Esophagus muscularis mucosa (tissue), 4 donors: ENCODE measurements at regions of chr7 and their contacts with region 1.

Region 1: GRCh38 chr7:27196287-27196767 is 3.6 kb downstream of the HOXA13 start:
- DNase-seq: no peak
- H3K4me3 ChIP-seq: no peak overlapping the region
- H3K27ac ChIP-seq: no peak overlapping the region
- H3K4me1 ChIP-seq: peaks cover 28 to 54% (median 50%) of the 10 kb centered on the region in 4 donors
- H3K27me3 ChIP-seq: peaks cover 10 to 100% (median 85%) of the 10 kb centered on the region in 4 donors
- CTCF ChIP-seq: peak; percentile 61 to 70 (median 66)
- EP300 ChIP-seq: no peak
- POLR2A ChIP-seq: no peak

Region 2: GRCh38 chr7:26735976-26736600 is 460.2 kb before region 1 on chr7:
- intact Hi-C with region 1: no loop called
- DNase-seq: no peak
- H3K4me3 ChIP-seq: no peak overlapping the region
- H3K27ac ChIP-seq: no peak overlapping the region
- H3K4me1 ChIP-seq: no peaks in the 10 kb centered on the region
- H3K27me3 ChIP-seq: no peaks in the 10 kb centered on the region
- CTCF ChIP-seq: no peak
- EP300 ChIP-seq: no peak
- POLR2A ChIP-seq: no peak

Region 3: DNA sequence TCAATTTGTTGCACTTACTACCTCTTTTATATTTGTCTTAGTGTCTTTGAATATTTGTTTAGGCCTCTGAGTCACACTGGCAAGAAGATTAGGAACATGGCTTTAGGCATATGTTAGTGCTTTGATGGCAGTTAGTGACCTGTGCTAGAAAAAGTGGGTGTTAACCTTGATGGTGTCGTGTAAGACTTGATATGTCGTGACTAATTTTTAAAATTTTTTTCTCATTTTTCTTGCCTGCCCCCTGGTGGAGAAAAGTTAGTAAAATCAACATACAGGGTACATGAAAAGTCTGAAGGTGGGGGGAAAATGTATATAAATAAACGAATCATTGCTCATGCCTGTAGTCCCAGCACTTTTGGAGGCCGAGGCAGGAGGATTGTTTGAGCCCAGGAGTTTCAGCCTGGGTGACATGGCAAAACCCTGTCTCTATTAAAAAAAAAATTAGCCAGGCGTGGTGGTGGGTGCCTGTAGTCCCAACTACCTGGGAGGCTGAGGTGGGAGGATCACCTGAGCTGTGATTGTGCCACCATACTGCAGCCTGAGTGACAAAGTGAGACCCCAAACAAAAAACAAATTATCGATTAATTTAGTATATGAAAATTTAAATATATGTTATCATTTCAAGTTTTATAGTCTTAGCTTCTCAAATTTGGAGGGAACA is 588.2 kb after region 1 on chr7:
- intact Hi-C with region 1: loop called (anchors 10 kb)
- DNase-seq: no peak
- H3K4me3 ChIP-seq: no peak overlapping the region
- H3K27ac ChIP-seq: no peak overlapping the region
- H3K4me1 ChIP-seq: peaks cover 0 to 8% (median 4%) of the 10 kb centered on the region in 4 donors
- H3K27me3 ChIP-seq: no peaks in the 10 kb centered on the region
- CTCF ChIP-seq: peak; percentile 38 to 55 (median 43)
- EP300 ChIP-seq: no peak
- POLR2A ChIP-seq: no peak

Region 4: DNA sequence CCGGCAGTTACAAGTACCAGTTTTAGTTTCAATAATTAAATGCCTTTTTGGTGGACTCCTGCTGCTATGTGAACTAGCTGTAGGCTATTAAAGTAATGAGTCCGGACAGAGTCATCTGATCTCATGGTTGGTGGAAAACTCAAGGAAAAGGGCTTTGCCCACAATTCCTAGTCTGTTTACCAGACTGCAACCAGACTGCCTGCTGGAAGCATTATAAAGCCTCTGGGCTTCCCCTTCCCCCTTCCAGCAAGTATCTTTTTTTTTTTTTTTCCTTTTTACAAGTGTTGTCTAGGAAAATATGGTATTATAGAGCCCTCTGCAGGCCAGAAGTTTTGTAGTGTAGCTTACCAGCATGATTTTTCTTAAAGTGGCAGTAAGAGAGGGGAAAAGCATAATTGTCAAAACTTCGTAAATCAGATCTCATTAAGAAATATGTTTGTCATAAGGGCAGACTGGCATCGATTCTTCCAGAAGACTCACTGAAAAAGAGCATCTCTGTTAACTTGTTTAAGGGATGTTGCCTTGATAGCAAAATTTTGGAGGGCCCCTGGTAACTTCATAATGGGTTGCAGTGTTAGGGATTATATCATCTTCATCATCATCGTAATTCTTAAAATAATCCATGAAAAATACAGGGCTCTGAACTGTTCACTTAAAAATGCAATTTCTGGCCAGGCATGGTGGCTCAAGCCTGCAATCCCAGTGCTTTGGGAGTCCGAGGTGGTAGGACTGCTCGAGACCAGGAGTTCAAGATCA is 724.9 kb after region 1 on chr7:
- intact Hi-C with region 1: loop called (anchors 5 kb)
- DNase-seq: no peak
- H3K4me3 ChIP-seq: no peak overlapping the region
- H3K27ac ChIP-seq: no peak overlapping the region
- H3K4me1 ChIP-seq: peaks cover 12 to 25% (median 18%) of the 10 kb centered on the region in 4 donors
- H3K27me3 ChIP-seq: no peaks in the 10 kb centered on the region
- CTCF ChIP-seq: peak; percentile 35 to 48 (median 45)
- EP300 ChIP-seq: no peak
- POLR2A ChIP-seq: no peak

Region 5: GRCh38 chr7:28020302-28020940 is 824.1 kb after region 1 on chr7:
- intact Hi-C with region 1: loop called (anchors 10 kb)
- DNase-seq: no peak
- H3K4me3 ChIP-seq: no peak overlapping the region
- H3K27ac ChIP-seq: no peak overlapping the region
- H3K4me1 ChIP-seq: peaks cover 29 to 64% (median 55%) of the 10 kb centered on the region in 4 donors
- H3K27me3 ChIP-seq: no peaks in the 10 kb centered on the region
- CTCF ChIP-seq: peak; percentile 81 to 87 (median 86)
- EP300 ChIP-seq: no peak
- POLR2A ChIP-seq: no peak

Region 6: GRCh38 chr7:28096713-28097112 is 900.4 kb after region 1 on chr7:
- intact Hi-C with region 1: loop called (anchors 10 kb)
- DNase-seq: peak; percentile 92
- H3K4me3 ChIP-seq: no peak overlapping the region
- H3K27ac ChIP-seq: peak overlapping the region; percentile 21 to 56 (median 48)
- H3K4me1 ChIP-seq: peaks cover 23 to 71% (median 44%) of the 10 kb centered on the region in 4 donors
- H3K27me3 ChIP-seq: no peaks in the 10 kb centered on the region
- CTCF ChIP-seq: peak; percentile 83 to 90 (median 90)
- EP300 ChIP-seq: no peak
- POLR2A ChIP-seq: no peak

Region 7: GRCh38 chr7:28272461-28272877 is 1076.1 kb after region 1 on chr7:
- intact Hi-C with region 1: loop called (anchors 5 kb)
- DNase-seq: no peak
- H3K4me3 ChIP-seq: peak overlapping the region in 3 of 4 donors; percentile 23 to 31 (median 28)
- H3K27ac ChIP-seq: no peak overlapping the region
- H3K4me1 ChIP-seq: peaks cover 0 to 7% (median 4%) of the 10 kb centered on the region in 4 donors
- H3K27me3 ChIP-seq: no peaks in the 10 kb centered on the region
- CTCF ChIP-seq: peak; percentile 51 to 72 (median 62)
- EP300 ChIP-seq: no peak
- POLR2A ChIP-seq: no peak